ENCODE measurements at regions of chr2 and their contacts with region 1.

Region 1: GRCh38 chr2:127106951-127107621 is at the start of gene BIN1:
- DNase-seq: peak; percentile 35 to 90 (median 69)
- ATAC-seq: peak; percentile 86
- H3K4me3 ChIP-seq: peak within 1 kb of the TSS; percentile 65 to 77
- H3K4me3 Mint-ChIP-seq: peak within 1 kb of the TSS; percentile 87
- H3K27ac ChIP-seq: peak within 1 kb of the TSS in 1 of 2 experiments; percentile 0
- H3K27ac Mint-ChIP-seq: peak within 1 kb of the TSS; percentile 12
- H3K4me1 ChIP-seq: peaks cover 6% of the 10 kb centered on the region
- H3K4me1 Mint-ChIP-seq: peaks cover 6% of the 10 kb centered on the region
- H3K27me3 ChIP-seq: peaks cover 4 to 14% of the 10 kb centered on the region in 2 experiments
- H3K27me3 Mint-ChIP-seq: peaks cover 12% of the 10 kb centered on the region
- CTCF ChIP-seq: no peak
- total RNA-seq, gene BIN1: 92.1 to 92.4 TPM

Region 2: GRCh38 chr2:127086990-127087790 is 19.9 kb before region 1 on chr2:
- CTCF ChIA-PET with region 1: interaction called, 3 read pairs
- POLR2A ChIA-PET with region 1: interaction called, 9 read pairs
- intact Hi-C with region 1: loop called (anchors 1 kb)
- DNase-seq: no peak
- ATAC-seq: no peak
- H3K4me3 ChIP-seq: no peak overlapping the region
- H3K4me3 Mint-ChIP-seq: no peak overlapping the region
- H3K27ac ChIP-seq: peak overlapping the region in 1 of 2 experiments; percentile 51
- H3K27ac Mint-ChIP-seq: peak overlapping the region; percentile 84
- H3K4me1 ChIP-seq: peaks cover 53% of the 10 kb centered on the region
- H3K4me1 Mint-ChIP-seq: peaks cover 49% of the 10 kb centered on the region
- H3K27me3 ChIP-seq: no peaks in the 10 kb centered on the region
- H3K27me3 Mint-ChIP-seq: no peaks in the 10 kb centered on the region
- CTCF ChIP-seq: no peak

Measured in CD8-positive, alpha-beta T cell (primary cell).